Heart right ventricle (tissue), 16 donors: ENCODE measurements at regions of chr2 and their contacts with region 1.

Region 1: GRCh38 chr2:40783704-40784103 is 331.8 kb upstream of the SLC8A1 start:
- DNase-seq: no peak
- ATAC-seq: no peak
- H3K4me3 ChIP-seq: no peak overlapping the region
- H3K27ac ChIP-seq: no peak overlapping the region
- H3K4me1 ChIP-seq: no peaks in the 10 kb centered on the region
- H3K27me3 ChIP-seq: no peaks in the 10 kb centered on the region
- CTCF ChIP-seq: no peak

Region 2: DNA sequence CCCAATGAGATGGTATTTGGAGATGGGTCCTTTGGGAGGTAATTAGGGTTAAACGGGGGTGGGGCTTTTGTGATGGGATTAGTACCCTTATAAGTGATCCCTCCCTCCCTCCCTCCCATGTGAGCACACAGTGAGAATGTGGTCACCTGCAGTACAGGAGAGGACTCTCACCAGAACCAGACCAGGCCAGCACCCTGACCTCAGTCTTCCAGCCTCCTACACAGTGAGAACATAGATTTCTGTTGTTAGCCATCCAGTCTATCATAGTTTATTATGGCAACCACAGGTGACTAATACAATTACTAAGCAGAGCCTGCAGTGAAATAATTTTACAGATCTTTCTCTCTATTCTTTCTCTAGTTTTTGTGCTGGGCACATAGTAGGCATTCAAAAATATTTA is 1126.4 kb after region 1 on chr2:
- intact Hi-C with region 1: loop called in 1 of 10 experiments (anchors 5 kb)
- DNase-seq: no peak
- ATAC-seq: no peak
- H3K4me3 ChIP-seq: no peak overlapping the region
- H3K27ac ChIP-seq: no peak overlapping the region
- H3K4me1 ChIP-seq: peaks cover 0 to 30% (median 15%) of the 10 kb centered on the region in 9 donors
- H3K27me3 ChIP-seq: no peaks in the 10 kb centered on the region
- CTCF ChIP-seq: no peak